Lower leg skin (tissue), 4 donors: ENCODE measurements at regions of chr12 and their contacts with region 1.

Region 1: GRCh38 chr12:72173974-72174373 is 98.2 kb upstream of the TRHDE start:
- DNase-seq: no peak
- H3K4me3 ChIP-seq: no peak overlapping the region
- CTCF ChIP-seq: no peak
- POLR2A ChIP-seq: no peak

Region 2: GRCh38 chr12:72133497-72134055 is 40.4 kb before region 1 on chr12:
- intact Hi-C with region 1: loop called (anchors 1 kb)
- DNase-seq: no peak
- H3K4me3 ChIP-seq: no peak overlapping the region
- CTCF ChIP-seq: no peak
- POLR2A ChIP-seq: no peak